CD4-positive, alpha-beta memory T cell (primary cell): ENCODE measurements at regions of chr11 and their contacts with region 1.

Region 1: DNA sequence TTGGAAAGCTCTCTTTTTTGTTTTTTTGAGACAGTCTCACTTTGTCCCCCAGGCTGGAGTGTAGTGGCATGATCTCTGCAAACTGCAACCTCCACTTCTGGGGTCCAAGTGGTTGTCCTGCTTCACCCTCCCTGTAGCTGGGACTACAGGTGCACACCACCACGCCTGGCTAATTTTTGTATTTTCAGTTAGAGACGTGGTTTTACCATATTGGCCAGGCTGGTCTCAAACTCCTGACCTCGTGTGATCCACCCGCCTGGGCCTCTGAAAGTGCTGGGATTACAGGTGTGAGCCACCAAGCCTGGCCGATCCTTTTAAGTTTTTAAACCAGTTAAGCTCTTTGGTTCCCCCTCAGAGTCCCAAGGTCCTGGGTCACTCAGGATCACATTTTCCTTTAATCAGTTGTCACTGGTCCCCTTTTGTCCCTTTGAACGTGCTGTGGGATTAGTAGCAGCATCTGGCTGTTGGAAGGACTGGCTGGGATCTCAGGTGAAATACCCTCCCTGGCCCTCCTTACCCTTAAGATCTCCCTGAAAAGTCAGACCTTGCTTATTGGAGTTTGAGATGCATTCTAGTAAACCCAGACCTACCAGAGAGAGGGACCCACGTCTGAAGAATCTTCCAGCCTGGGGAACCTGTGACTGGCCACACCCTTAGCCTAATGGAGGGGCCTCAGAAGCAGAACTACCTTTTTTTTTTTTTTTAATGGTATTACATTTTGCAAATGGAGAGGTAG is 8.1 kb downstream of the MALAT1 start:
- DNase-seq: peak in 3 of 5 donors; percentile 40 to 72 (median 52)
- H3K4me3 ChIP-seq: no peak overlapping the region
- H3K4me3 Mint-ChIP-seq: no peak overlapping the region
- H3K27ac ChIP-seq: peak overlapping the region; percentile 35
- H3K27ac Mint-ChIP-seq: peak overlapping the region in 6 of 7 donors; percentile 84 to 96 (median 93)
- H3K4me1 ChIP-seq: peaks cover 52% of the 10 kb centered on the region
- H3K4me1 Mint-ChIP-seq: peaks cover 35 to 64% (median 50%) of the 10 kb centered on the region in 4 donors
- H3K27me3 ChIP-seq: no peaks in the 10 kb centered on the region
- H3K27me3 Mint-ChIP-seq: no peaks in the 10 kb centered on the region

Region 2: GRCh38 chr11:65274735-65275682 is 231.9 kb before region 1 on chr11:
- CTCF ChIA-PET with region 1: interaction called, 14 read pairs
- POLR2A ChIA-PET with region 1: no interaction called
- intact Hi-C with region 1: loop called (anchors 1 kb)
- DNase-seq: peak; percentile 19 to 39 (median 29)
- H3K4me3 ChIP-seq: no peak overlapping the region
- H3K4me3 Mint-ChIP-seq: no peak overlapping the region
- H3K27ac ChIP-seq: no peak overlapping the region
- H3K27ac Mint-ChIP-seq: peak overlapping the region in 2 of 7 donors; percentile 5 to 11
- H3K4me1 ChIP-seq: peaks cover 8% of the 10 kb centered on the region
- H3K4me1 Mint-ChIP-seq: peaks cover 6 to 12% (median 9%) of the 10 kb centered on the region in 4 donors
- H3K27me3 ChIP-seq: no peaks in the 10 kb centered on the region
- H3K27me3 Mint-ChIP-seq: no peaks in the 10 kb centered on the region

Region 3: DNA sequence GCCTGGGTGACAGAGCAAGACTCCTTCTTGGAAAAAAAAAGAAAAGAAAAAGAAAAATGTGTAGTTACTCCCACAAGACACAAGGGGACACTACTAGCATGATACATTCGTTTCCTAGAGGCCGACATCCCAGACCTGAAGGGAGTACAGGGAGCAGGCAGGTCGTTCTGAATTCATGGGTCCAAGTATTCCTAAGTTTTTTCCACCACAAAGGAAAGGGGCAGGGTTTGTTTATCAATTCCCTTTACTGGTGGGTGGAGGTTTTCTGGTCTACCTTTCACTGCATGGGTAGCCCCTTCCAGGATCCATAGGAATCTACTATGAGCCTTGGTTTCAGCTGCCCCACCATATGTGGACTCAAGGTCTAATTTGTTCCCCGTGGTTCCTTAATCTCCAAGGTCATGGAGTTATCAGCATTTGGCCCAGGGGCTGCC is 140.6 kb before region 1 on chr11:
- CTCF ChIA-PET with region 1: interaction called, 17 read pairs
- POLR2A ChIA-PET with region 1: interaction called, 9 read pairs
- intact Hi-C with region 1: loop called (anchors 1 kb)
- DNase-seq: peak; percentile 59 to 69 (median 64)
- H3K4me3 ChIP-seq: no peak overlapping the region
- H3K4me3 Mint-ChIP-seq: no peak overlapping the region
- H3K27ac ChIP-seq: no peak overlapping the region
- H3K27ac Mint-ChIP-seq: no peak overlapping the region
- H3K4me1 ChIP-seq: no peaks in the 10 kb centered on the region
- H3K4me1 Mint-ChIP-seq: peaks cover 0 to 3% (median 1%) of the 10 kb centered on the region in 4 donors
- H3K27me3 ChIP-seq: no peaks in the 10 kb centered on the region
- H3K27me3 Mint-ChIP-seq: no peaks in the 10 kb centered on the region

Region 4: GRCh38 chr11:65432686-65433582 is 74.0 kb before region 1 on chr11:
- CTCF ChIA-PET with region 1: interaction called, 4 read pairs
- POLR2A ChIA-PET with region 1: interaction called, 3,839 read pairs
- intact Hi-C with region 1: no loop called
- DNase-seq: peak in 4 of 5 donors; percentile 55 to 68 (median 60)
- H3K4me3 ChIP-seq: no peak overlapping the region
- H3K4me3 Mint-ChIP-seq: peak overlapping the region in 5 of 8 donors; percentile 27 to 61 (median 40)
- H3K27ac ChIP-seq: peak overlapping the region; percentile 2
- H3K27ac Mint-ChIP-seq: peak overlapping the region; percentile 77 to 94 (median 89)
- H3K4me1 ChIP-seq: peaks cover 77% of the 10 kb centered on the region
- H3K4me1 Mint-ChIP-seq: peaks cover 65 to 92% (median 76%) of the 10 kb centered on the region in 4 donors
- H3K27me3 ChIP-seq: no peaks in the 10 kb centered on the region
- H3K27me3 Mint-ChIP-seq: no peaks in the 10 kb centered on the region

Region 5: GRCh38 chr11:65471410-65471762 is 35.6 kb before region 1 on chr11:
- CTCF ChIA-PET with region 1: interaction called, 86 read pairs
- POLR2A ChIA-PET with region 1: interaction called, 1,536 read pairs
- intact Hi-C with region 1: loop called (anchors 2 kb)
- DNase-seq: no peak
- H3K4me3 ChIP-seq: no peak overlapping the region
- H3K4me3 Mint-ChIP-seq: peak overlapping the region in 1 of 8 donors; percentile 74
- H3K27ac ChIP-seq: peak overlapping the region; percentile 74
- H3K27ac Mint-ChIP-seq: peak overlapping the region; percentile 88 to 99 (median 98)
- H3K4me1 ChIP-seq: peaks cover 18% of the 10 kb centered on the region
- H3K4me1 Mint-ChIP-seq: peaks cover 12 to 27% (median 22%) of the 10 kb centered on the region in 4 donors
- H3K27me3 ChIP-seq: no peaks in the 10 kb centered on the region
- H3K27me3 Mint-ChIP-seq: no peaks in the 10 kb centered on the region

Region 6: GRCh38 chr11:65546217-65546958 is 39.5 kb after region 1 on chr11:
- CTCF ChIA-PET with region 1: interaction called, 3 read pairs
- POLR2A ChIA-PET with region 1: interaction called, 11 read pairs
- intact Hi-C with region 1: no loop called
- DNase-seq: peak; percentile 96 to 99 (median 97)
- H3K4me3 ChIP-seq: peak overlapping the region in 1 of 2 donors; percentile 41
- H3K4me3 Mint-ChIP-seq: peak overlapping the region; percentile 79 to 92 (median 80)
- H3K27ac ChIP-seq: peak overlapping the region; percentile 59
- H3K27ac Mint-ChIP-seq: peak overlapping the region; percentile 81 to 97 (median 94)
- H3K4me1 ChIP-seq: peaks cover 46% of the 10 kb centered on the region
- H3K4me1 Mint-ChIP-seq: peaks cover 31 to 65% (median 43%) of the 10 kb centered on the region in 4 donors
- H3K27me3 ChIP-seq: no peaks in the 10 kb centered on the region
- H3K27me3 Mint-ChIP-seq: no peaks in the 10 kb centered on the region